CD14-positive monocyte (primary cell): ENCODE measurements at regions of chr6 and their contacts with region 1.

Region 1: DNA sequence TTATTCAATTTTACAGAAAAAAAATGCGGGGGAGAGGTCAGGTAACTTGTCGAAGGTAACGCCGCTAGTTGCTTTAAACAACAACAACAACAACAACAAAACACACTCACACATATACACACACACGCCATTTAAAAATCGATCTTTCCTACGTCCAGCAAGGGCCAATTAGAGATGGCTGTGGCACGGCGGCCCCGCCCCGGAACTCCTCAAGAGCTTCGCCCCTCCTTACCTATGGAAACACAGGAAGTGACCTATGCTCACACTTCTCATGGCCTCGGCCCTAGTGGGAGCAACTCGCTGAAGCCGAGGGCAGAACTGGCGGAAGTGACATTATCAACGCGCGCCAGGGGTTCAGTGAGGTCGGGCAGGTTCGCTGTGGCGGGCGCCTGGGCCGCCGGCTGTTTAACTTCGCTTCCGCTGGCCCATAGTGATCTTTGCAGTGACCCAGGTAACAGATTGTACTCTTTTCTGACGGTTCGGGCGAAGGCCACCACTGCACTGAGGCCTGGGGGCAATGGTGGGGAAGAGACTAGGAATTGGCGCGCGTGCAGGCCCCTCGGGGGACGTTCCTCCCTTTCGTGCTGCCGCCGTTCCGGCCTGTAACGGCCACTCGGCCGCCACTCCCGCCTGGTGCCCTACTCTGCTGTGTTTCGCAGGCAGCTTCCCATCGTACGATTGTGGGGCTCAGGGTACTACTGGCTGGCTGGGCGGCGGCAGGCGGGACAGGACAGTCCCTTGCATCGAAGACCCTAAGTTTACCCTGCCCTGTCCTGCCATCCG is at the start of gene TBP:
- DNase-seq: peak; percentile 98 to 99 (median 99)
- H3K4me3 ChIP-seq: peak within 1 kb of the TSS; percentile 71 to 90 (median 89)
- H3K4me3 Mint-ChIP-seq: no peak within 1 kb of the TSS
- H3K27ac ChIP-seq: peak within 1 kb of the TSS; percentile 96
- H3K27ac Mint-ChIP-seq: no peak within 1 kb of the TSS
- H3K4me1 ChIP-seq: peaks cover 22 to 26% of the 10 kb centered on the region in 2 donors
- H3K4me1 Mint-ChIP-seq: peaks cover 13% of the 10 kb centered on the region
- H3K27me3 ChIP-seq: no peaks in the 10 kb centered on the region
- H3K27me3 Mint-ChIP-seq: no peaks in the 10 kb centered on the region
- CTCF ChIP-seq: no peak
- polyA plus RNA-seq, gene TBP: 7.3 to 14.5 (median 14.4) TPM

Region 2: DNA sequence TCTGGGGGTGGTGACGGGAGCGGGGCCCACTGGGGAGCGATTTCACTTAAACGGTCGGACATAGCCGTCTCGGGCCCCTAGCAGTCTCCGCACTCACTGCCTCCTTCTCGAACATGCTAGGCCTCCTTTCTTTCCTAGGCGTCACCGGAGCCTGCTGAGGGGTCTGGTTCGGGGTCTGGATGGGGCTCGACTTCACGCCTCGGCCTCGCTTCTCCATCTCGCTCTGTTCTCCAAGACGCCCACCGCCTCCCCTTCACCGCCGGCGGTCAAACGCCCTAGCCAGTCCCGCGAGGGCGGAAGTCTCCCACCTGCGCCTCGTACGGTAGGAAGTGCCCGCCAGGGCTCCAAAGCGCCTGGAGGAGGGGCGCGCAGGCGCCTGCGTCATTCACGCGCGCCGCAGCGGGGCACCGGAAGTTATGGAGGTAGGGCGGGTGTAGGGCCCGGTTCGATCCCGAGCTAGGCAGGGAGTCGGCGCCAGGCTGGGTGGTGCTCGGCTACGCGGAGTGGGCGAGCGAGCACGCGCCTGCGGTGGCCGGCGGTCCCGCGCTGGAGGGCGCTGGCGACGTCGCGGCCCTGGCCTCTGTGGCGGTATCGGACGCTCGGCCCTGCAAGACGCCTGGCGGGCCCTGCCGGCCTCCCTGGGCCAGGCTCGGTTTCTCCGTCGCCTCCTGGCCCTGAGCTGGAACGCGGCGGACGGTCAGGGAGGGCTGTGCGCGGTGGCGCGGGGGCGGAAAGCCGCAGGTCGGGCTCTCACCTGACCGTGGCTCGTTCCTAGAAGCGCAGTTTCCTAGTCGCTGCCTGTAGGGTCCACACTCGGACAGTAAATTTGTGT is 802.7 kb before region 1 on chr6 and contains the starts of genes DYNLT2 and ERMARD:
- intact Hi-C with region 1: loop called (anchors 2 kb)
- DNase-seq: peak; percentile 88 to 92 (median 92)
- H3K4me3 ChIP-seq: peak within 1 kb of the TSS; percentile 51 to 95 (median 84)
- H3K4me3 Mint-ChIP-seq: peak within 1 kb of the TSS; percentile 94 to 99
- H3K27ac ChIP-seq: peak within 1 kb of the TSS; percentile 87 to 94
- H3K27ac Mint-ChIP-seq: peak within 1 kb of the TSS; percentile 97 to 100 (median 98)
- H3K4me1 ChIP-seq: peaks cover 17 to 18% of the 10 kb centered on the region in 2 donors
- H3K4me1 Mint-ChIP-seq: peaks cover 26% of the 10 kb centered on the region
- H3K27me3 ChIP-seq: no peaks in the 10 kb centered on the region
- H3K27me3 Mint-ChIP-seq: peaks cover 0 to 3% (median 0%) of the 10 kb centered on the region in 3 donors
- CTCF ChIP-seq: peak; percentile 21
- polyA plus RNA-seq, gene DYNLT2: 0.19 to 1.5 (median 0.86) TPM
- polyA plus RNA-seq, gene ERMARD: 10.6 to 33.0 (median 11.2) TPM

Region 3: GRCh38 chr6:170306324-170307079 is 247.7 kb before region 1 on chr6 and contains the start of gene FAM120B:
- intact Hi-C with region 1: loop called (anchors 5 kb)
- DNase-seq: peak; percentile 96 to 98 (median 97)
- H3K4me3 ChIP-seq: peak within 1 kb of the TSS; percentile 79 to 89 (median 83)
- H3K4me3 Mint-ChIP-seq: peak within 1 kb of the TSS; percentile 89 to 99
- H3K27ac ChIP-seq: peak within 1 kb of the TSS; percentile 90 to 99
- H3K27ac Mint-ChIP-seq: peak within 1 kb of the TSS; percentile 96 to 99 (median 99)
- H3K4me1 ChIP-seq: peaks cover 24 to 28% of the 10 kb centered on the region in 2 donors
- H3K4me1 Mint-ChIP-seq: peaks cover 45% of the 10 kb centered on the region
- H3K27me3 ChIP-seq: peaks cover 4 to 5% of the 10 kb centered on the region in 2 donors
- H3K27me3 Mint-ChIP-seq: peaks cover 12 to 19% (median 18%) of the 10 kb centered on the region in 3 donors
- CTCF ChIP-seq: no peak
- polyA plus RNA-seq, gene FAM120B: 10.6 to 20.2 (median 11.2) TPM

Region 4: DNA sequence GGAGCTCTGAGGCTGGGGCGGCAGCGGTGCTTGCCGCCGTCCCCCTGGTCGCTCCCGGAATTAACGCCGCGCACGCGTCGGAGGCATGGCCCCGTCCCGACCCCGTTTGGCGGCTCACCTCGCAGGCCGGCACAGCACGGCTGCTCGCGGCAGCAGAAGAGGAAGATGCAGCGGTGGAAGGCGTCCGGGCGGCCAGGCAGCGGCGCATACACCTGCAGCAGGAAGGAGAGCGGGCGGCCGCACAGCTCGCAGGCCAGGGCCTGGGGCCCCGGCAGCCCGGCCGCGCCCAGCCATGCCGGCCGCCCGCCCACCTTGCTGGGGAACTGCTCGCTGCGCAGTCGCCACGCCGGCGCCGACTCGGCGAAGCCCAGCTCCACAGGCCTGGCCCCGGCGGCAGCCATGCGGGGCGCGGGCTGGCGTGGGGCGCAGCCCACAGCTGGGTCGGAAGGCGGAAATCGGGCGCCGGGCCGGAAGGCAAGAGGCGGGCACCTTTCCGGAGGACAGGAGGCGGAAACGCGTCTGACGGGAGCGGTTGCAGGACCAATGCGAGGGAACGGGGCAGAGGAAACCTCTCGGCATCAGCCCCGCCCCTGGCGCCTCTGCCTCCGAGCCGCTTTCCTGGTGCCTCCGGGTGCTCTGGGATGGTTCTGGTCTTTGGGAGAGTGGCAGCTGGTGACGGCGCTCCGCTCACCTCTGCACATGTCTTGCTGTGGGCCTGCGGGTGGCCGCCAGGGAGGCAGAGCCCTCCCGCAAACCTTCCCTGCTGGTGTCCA is 30.2 kb after region 1 on chr6 and contains the start of gene PDCD2:
- intact Hi-C with region 1: no loop called
- DNase-seq: peak; percentile 85 to 91 (median 86)
- H3K4me3 ChIP-seq: peak within 1 kb of the TSS; percentile 56 to 88 (median 82)
- H3K4me3 Mint-ChIP-seq: peak within 1 kb of the TSS; percentile 96
- H3K27ac ChIP-seq: peak within 1 kb of the TSS; percentile 57 to 87
- H3K27ac Mint-ChIP-seq: peak within 1 kb of the TSS; percentile 90 to 99 (median 97)
- H3K4me1 ChIP-seq: peaks cover 14 to 19% of the 10 kb centered on the region in 2 donors
- H3K4me1 Mint-ChIP-seq: peaks cover 15% of the 10 kb centered on the region
- H3K27me3 ChIP-seq: no peaks in the 10 kb centered on the region
- H3K27me3 Mint-ChIP-seq: peaks cover 0 to 4% (median 2%) of the 10 kb centered on the region in 3 donors
- CTCF ChIP-seq: peak; percentile 3
- polyA plus RNA-seq, gene PDCD2: 35.7 to 81.0 (median 69.4) TPM